Activated T-helper 1 cell treated with anti-CD3 and anti-CD28 coated beads, Interleukin-12 subunit alpha, Interleukin-12 subunit beta, Interleukin-2, Interleukin-4 antibody, amounts not matched to agents 30 ng/mL and 10 ng/mL and 1 ng/mL, durations not matched to agents 14 hours and 24 hours and 36 hours (primary cell): ENCODE measurements at regions of chr10 and their contacts with region 1.

Region 1: GRCh38 chr10:101889256-101890210 is 45.9 kb upstream of the KCNIP2 start:
- DNase-seq: peak; percentile 52
- H3K4me3 Mint-ChIP-seq: no peak overlapping the region
- H3K27ac Mint-ChIP-seq: no peak overlapping the region
- H3K4me1 Mint-ChIP-seq: peaks cover 9% of the 10 kb centered on the region
- H3K27me3 Mint-ChIP-seq: no peaks in the 10 kb centered on the region

Region 2: DNA sequence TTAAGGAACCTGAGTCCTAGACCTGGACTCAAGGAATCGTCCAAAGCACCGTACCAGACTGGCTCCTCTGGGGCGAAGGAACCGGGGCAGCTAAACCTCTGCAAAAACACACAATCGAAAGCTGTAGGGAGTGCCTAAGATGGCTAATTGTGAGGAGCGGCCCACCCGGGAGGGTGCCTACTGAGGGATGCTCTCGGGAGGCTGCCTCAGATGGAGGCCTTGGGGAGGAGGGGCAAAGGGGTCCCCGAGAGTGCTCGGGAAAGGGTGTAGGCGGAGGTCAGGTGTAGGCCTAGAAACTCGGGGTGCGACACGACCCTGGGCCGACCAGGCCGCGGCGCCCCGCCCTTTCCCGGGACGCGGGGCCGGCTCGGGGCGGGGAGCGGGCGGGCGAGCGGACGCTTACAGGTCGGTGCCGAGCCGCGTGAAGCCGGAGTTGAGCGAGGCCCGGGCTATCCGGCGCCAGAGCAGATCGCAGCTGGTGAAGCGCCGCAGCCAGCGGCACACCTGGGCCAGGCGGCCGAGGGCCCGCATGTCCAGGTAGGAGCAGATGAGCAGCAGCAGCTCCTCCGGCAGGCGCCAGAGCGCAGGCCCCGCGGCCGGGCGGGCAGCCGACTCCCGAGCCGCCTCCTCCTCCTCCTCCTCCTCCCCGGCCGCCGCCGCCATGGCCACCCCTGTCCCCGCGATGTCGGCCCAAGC is 195.4 kb before region 1 on chr10:
- intact Hi-C with region 1: no loop called
- DNase-seq: peak; percentile 70
- H3K4me3 Mint-ChIP-seq: peak overlapping the region; percentile 93
- H3K27ac Mint-ChIP-seq: peak overlapping the region; percentile 98
- H3K4me1 Mint-ChIP-seq: peaks cover 41% of the 10 kb centered on the region
- H3K27me3 Mint-ChIP-seq: no peaks in the 10 kb centered on the region

Region 3: DNA sequence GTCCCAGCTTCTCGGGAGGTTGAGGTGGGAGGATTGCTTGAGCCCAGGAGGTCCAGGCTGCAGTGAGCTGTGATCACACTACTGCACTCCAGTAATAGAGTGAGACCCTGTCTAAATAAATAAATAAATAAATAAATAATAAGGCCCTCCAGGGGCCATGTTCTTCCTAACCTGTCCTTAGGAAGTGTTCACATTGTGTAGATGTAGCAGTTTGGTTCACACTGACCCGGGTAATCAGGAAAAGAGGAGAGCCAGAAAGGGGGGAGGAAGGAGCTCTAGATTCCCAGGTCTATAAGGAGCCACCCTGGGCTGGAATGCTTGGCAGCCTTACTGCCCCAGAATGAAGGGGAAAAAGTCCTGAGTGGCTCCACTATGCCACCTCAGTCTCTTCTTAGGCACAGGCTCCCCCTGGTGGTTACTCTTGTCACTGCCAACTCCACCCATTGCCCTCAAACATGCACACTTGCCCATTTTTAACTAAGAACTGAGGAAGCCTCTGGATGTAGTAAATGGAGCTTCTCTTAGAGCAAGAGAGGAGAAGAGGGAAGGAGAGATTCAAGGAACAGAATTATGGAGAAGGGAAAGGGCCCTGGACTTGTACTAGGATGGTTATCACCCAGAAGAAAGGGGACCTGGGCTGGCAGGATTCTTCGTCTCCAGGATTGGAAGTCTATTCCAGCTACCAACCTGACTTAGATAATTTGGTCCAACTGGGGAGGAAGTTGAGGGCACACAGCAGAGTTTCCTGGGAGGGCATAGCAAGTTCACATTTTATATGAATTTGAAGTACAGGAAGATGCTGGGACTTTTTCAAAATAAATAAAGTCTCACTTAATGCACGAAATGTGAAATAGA is 183.4 kb after region 1 on chr10:
- intact Hi-C with region 1: loop called (anchors 1 kb)
- DNase-seq: peak; percentile 67
- H3K4me3 Mint-ChIP-seq: no peak overlapping the region
- H3K27ac Mint-ChIP-seq: no peak overlapping the region
- H3K4me1 Mint-ChIP-seq: peaks cover 6% of the 10 kb centered on the region
- H3K27me3 Mint-ChIP-seq: no peaks in the 10 kb centered on the region

Region 4: GRCh38 chr10:102291221-102291905 is 401.8 kb after region 1 on chr10:
- intact Hi-C with region 1: no loop called
- DNase-seq: no peak
- H3K4me3 Mint-ChIP-seq: no peak overlapping the region
- H3K27ac Mint-ChIP-seq: no peak overlapping the region
- H3K4me1 Mint-ChIP-seq: peaks cover 16% of the 10 kb centered on the region
- H3K27me3 Mint-ChIP-seq: no peaks in the 10 kb centered on the region